ENCODE measurements at regions of chr3 and their contacts with region 1.

Region 1: DNA sequence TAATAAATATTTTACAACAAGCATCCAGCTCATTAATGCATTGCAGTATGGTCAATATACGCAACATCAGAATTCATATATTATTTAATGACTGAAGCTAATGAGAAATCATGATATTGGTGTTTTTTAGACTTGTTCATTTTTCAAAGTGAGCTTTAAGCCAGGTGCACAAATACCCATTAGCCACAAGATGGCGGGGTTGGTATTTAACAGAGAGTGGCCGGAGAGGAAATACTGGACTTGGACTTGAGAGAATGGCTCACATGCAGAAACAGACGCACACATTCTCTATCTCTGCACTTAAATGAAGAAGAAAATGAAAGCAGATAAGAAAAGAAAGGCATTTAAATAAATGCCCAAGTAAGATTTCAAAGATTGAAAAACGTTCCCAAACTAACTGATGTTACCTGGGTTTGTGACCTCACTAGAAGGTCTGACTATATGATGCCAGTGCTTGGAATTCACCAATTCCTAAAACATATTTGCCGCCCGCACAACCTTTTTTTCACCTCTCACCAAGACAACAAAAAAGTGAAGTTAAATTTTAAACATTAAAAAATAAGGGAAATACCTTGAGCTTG is 21.2 kb upstream of the CRBN start:
- DNase-seq: peak; percentile 45
- H3K4me3 Mint-ChIP-seq: no peak overlapping the region
- H3K27ac Mint-ChIP-seq: no peak overlapping the region
- H3K4me1 Mint-ChIP-seq: no peaks in the 10 kb centered on the region
- H3K27me3 Mint-ChIP-seq: peaks cover 58% of the 10 kb centered on the region
- CTCF ChIP-seq: peak; percentile 56

Region 2: DNA sequence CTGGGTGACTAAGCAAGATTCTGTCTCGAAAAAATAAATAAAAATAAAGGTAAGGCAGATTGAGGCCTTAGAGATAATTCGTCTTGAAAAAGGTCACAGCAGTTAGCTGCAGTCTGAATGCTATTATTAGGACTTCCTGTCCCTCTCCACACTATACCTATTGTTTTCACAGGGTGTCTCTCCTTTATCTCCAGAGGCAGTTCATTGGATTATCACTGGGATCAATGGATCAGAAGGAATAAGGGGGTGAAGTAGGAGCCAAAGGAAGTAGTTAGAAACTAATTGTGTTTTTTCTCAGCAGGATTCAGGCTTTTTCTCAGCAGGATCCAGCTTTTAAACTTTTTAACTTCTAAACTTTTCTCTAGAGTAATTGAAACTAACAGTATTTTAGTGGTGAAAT is 417.5 kb before region 1 on chr3:
- CTCF ChIA-PET with region 1: no interaction called
- intact Hi-C with region 1: no loop called
- DNase-seq: no peak
- H3K4me3 Mint-ChIP-seq: no peak overlapping the region
- H3K27ac Mint-ChIP-seq: no peak overlapping the region
- H3K4me1 Mint-ChIP-seq: no peaks in the 10 kb centered on the region
- H3K27me3 Mint-ChIP-seq: no peaks in the 10 kb centered on the region
- CTCF ChIP-seq: no peak

Region 3: DNA sequence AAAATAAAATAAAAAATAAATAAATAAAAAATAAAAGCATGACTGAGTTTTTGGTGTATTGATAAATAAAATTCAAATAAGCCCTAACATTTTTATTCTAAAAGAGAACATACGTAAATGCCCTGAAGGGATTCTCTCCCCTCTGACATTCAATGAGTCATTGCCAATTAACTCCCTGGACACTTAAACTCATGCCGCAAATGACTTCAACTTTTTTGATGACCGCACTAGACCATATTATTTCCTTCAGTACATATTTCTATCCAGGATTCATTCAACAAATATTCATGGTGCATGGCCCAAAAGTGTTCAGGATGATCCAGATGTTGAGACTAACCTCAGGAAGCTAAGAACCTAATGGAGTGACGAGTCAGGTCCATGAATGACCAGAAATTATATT is 402.6 kb after region 1 on chr3:
- CTCF ChIA-PET with region 1: no interaction called
- intact Hi-C with region 1: loop called (anchors 5 kb)
- DNase-seq: no peak
- H3K4me3 Mint-ChIP-seq: no peak overlapping the region
- H3K27ac Mint-ChIP-seq: no peak overlapping the region
- H3K4me1 Mint-ChIP-seq: peaks cover 8% of the 10 kb centered on the region
- H3K27me3 Mint-ChIP-seq: no peaks in the 10 kb centered on the region
- CTCF ChIP-seq: no peak

Region 4: GRCh38 chr3:3799173-3800079 is 598.7 kb after region 1 on chr3 and contains the start of gene LRRN1:
- CTCF ChIA-PET with region 1: no interaction called
- intact Hi-C with region 1: loop called (anchors 2 kb)
- DNase-seq: peak; percentile 73
- H3K4me3 Mint-ChIP-seq: peak within 1 kb of the TSS; percentile 91
- H3K27ac Mint-ChIP-seq: peak within 1 kb of the TSS; percentile 23
- H3K4me1 Mint-ChIP-seq: no peaks in the 10 kb centered on the region
- H3K27me3 Mint-ChIP-seq: peaks cover 24% of the 10 kb centered on the region
- CTCF ChIP-seq: no peak
- total RNA-seq, gene LRRN1: 12.6 and 22.1 TPM in 2 replicates

Region 5: DNA sequence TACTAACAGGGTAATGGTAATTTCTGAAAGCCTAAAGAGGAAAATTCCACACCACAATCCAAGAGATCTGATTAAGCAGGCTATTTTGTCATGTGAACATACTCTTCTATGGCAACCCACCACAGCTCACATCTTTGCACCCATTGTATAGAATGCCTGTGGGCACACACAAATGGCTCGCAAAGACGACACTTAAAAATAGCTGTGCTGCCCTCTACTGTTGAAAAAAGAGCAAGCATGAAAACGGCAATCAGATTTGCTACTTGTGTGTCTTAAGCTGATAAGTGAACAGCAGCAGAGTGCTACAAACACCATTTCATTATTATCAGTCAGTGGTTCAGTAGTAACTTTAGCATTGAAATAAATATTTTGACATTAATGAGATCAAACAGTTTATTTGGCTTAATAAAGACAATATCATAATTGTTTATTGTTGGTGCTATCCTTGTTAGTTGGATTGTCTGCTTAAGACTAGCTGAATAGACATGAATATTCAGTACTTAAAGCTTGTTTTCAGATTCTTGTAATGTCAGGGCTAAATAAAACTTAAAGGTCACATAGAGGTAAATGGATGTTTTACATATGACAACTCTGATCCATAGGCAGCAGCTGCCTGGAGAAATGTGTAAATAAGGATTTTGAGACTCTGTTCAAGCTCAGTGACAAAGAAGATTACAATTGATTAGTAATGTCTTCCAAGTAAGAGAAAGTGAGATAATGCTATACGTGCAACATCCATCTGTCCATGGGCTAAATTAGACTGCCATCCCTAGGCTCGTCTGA is 797.6 kb after region 1 on chr3:
- CTCF ChIA-PET with region 1: interaction called, 23 read pairs
- intact Hi-C with region 1: loop called (anchors 1 kb)
- DNase-seq: peak; percentile 38
- H3K4me3 Mint-ChIP-seq: no peak overlapping the region
- H3K27ac Mint-ChIP-seq: no peak overlapping the region
- H3K4me1 Mint-ChIP-seq: no peaks in the 10 kb centered on the region
- H3K27me3 Mint-ChIP-seq: no peaks in the 10 kb centered on the region
- CTCF ChIP-seq: peak; percentile 23

Region 6: GRCh38 chr3:4271834-4272233 is 1071.1 kb after region 1 on chr3:
- CTCF ChIA-PET with region 1: interaction called, 19 read pairs
- intact Hi-C with region 1: loop called (anchors 1 kb)
- DNase-seq: peak; percentile 6
- H3K4me3 Mint-ChIP-seq: no peak overlapping the region
- H3K27ac Mint-ChIP-seq: no peak overlapping the region
- H3K4me1 Mint-ChIP-seq: no peaks in the 10 kb centered on the region
- H3K27me3 Mint-ChIP-seq: peaks cover 14% of the 10 kb centered on the region
- CTCF ChIP-seq: no peak

Region 7: DNA sequence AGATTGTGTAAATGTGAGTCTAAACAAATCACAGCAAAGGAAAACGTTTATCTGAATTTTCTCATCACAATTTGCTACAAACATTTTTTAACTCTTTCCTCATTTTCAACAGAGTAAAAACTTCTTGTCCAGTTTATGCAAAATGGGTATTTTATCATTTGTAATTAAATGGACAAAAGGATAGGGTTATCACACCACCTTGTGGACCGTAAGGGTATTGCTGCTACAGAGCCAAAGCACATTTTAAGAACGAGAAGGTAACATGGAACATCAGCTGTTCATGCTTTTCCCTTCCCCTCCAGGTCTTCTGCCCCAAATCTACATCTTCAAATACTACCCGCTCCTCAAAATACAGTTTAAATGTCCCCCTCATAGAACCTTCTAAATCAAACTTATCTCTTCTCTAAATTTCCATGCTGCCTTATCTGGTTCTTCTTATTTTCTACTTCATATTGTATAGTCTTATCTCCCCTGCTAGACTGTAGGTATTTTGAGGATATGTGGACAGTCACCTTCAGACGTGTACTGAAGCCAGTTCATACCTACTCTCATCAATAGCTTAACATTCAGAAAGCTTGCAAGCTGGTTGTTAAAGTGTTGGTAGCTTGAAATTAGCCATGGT is 1089.7 kb after region 1 on chr3:
- CTCF ChIA-PET with region 1: interaction called, 5 read pairs
- intact Hi-C with region 1: loop called (anchors 1 kb)
- DNase-seq: peak; percentile 29
- H3K4me3 Mint-ChIP-seq: no peak overlapping the region
- H3K27ac Mint-ChIP-seq: no peak overlapping the region
- H3K4me1 Mint-ChIP-seq: no peaks in the 10 kb centered on the region
- H3K27me3 Mint-ChIP-seq: peaks cover 27% of the 10 kb centered on the region
- CTCF ChIP-seq: peak; percentile 58